Left colon (tissue), 2 donors: ENCODE measurements at regions of chr13 and their contacts with region 1.

Region 1: GRCh38 chr13:113029487-113030258 is 60.7 kb downstream of the MCF2L start:
- DNase-seq: peak in 1 of 2 donors; percentile 50
- ATAC-seq: peak; percentile 60

Region 2: DNA sequence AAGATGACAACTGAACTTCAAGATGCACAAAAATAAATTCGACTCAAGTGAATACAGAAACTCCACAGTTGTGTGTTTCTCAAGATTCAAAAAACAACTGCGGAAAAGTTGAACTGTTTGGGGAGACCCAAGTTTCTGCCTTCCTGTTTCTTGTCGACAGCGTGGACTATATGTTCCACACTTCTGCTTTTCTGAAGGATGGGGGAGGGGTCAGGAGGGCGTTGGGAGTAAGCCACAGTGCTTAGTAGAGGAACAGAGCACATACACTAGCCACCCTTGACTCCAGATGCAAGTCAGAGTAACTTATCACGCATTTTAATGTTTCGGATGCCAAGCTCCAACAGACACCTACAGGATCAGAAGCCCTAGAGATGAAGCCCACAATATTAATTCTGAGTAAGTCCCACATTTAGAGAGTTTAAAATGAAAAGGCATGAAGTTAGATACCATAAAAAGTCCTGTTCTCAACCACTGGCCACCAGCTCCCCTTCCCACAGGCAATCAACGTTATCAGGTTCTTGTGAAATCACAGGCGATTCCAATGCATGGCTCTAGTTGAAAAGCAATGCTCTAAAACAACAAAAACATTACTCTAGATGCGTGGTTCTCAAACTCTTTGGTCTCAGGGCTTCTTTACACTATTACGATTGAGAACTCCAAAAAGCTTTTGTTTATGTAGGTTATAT is 445.9 kb before region 1 on chr13:
- intact Hi-C with region 1: no loop called
- DNase-seq: peak; percentile 28 to 39
- ATAC-seq: no peak

Region 3: DNA sequence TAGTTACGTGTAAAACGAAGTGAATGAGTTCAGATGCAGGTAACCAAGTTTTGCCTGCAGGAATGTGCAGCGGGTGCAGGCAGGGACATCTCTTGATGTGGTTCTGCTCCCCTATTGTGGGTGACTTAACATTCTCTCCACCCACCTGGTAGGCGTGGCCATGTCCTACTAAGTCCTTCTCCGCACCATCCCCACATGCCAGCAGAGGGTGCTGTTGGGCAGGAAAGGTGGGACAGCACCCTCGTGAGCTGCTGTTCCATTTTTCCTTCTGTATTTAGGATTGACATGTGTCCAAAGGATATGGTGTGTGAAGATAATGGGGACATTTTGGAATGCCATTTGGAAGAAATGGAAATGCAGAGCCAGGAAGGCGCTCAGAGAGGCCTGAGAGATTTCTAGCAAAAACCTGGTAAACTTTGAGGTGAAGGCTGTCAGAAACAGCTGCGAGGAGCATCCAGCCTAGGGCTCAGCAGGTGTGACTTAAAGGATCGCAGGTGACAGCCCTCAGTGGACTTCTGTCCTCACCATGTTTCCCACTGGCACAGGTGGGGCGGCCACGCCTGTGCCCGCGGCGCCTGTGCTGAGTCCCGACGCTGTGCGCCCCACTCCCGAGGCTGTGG is 86.9 kb before region 1 on chr13:
- intact Hi-C with region 1: loop called in 1 of 2 experiments (anchors 10 kb)
- DNase-seq: peak; percentile 94 to 100
- ATAC-seq: peak; percentile 92

Region 4: GRCh38 chr13:113364311-113364889 is 334.7 kb after region 1 on chr13:
- intact Hi-C with region 1: no loop called
- DNase-seq: peak; percentile 37 to 52
- ATAC-seq: no peak